ENCODE measurements at regions of chr7 and their contacts with region 1.

Region 1: GRCh38 chr7:123208793-123209192 is 9.0 kb upstream of the SLC13A1 start:
- DNase-seq: peak in 6 of 7 donors; percentile 20 to 58 (median 30)
- H3K4me3 ChIP-seq: no peak overlapping the region
- H3K27ac ChIP-seq: no peak overlapping the region
- H3K4me1 ChIP-seq: peaks cover 12% of the 10 kb centered on the region in 2 donors
- H3K27me3 ChIP-seq: no peaks in the 10 kb centered on the region
- CTCF ChIP-seq: peak; percentile 23 to 72 (median 51)
- POLR2A ChIP-seq: no peak

Region 2: DNA sequence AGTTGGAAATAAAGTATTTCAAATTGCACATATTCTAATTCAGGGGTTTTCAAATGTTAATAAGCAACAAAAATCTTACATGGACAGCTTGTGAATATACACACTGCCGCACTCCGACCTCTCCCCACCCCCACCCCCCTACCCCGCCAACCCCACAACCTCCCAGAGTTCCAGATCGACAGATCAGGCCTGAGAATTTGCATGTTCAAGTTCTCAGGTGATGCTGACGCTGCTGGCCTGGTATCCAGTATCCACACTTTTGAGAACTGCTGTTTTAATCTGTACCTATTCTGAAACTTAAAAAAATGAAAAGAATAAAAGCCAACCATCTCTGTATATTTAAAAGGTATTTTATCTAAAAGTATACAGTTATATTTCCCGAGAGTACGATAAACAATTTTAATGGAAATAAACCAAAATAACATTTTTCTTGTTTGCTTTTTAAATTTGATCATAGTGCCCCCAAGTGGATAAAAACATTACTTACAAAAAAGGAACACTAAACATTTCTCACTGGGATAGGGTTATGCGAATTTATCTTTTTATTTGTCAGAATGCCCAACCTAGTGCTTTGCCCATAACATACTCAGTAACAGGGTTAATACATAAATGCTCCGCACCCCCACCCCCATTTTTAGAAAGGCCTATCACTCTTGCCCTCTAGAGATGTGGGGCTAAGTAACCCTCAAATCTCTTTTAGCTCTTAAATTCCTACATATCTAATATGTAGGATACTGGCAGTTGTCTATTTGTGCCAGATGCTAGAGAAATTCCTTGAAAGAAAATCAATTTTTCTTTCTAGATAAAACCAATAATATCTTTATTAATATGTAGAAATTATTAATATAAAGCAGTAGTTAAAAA is 676.2 kb before region 1 on chr7:
- intact Hi-C with region 1: no loop called
- DNase-seq: no peak
- H3K4me3 ChIP-seq: no peak overlapping the region
- H3K27ac ChIP-seq: no peak overlapping the region
- H3K4me1 ChIP-seq: peaks cover 0 to 5% of the 10 kb centered on the region in 2 donors
- H3K27me3 ChIP-seq: no peaks in the 10 kb centered on the region
- CTCF ChIP-seq: peak; percentile 13 to 51 (median 34)
- POLR2A ChIP-seq: no peak

Region 3: DNA sequence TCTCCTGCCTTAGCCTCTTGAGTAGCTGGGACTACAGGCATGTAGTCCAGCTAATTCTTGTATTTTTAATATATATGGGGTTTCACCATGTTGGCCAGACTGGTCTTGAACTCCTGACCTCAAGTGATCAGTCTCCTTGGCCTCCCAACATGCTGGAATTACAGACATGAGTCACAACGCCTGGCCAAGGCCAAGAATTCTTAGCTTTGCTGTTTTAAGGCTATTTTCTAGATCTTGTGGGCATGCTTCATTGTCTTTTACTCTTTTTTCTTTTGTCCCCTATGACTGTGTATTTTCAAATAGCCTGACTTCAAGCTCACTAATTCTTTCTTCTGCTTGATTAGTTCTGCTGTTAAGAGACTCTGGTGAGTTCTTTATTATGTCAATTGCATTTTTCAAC is 156.9 kb before region 1 on chr7:
- intact Hi-C with region 1: no loop called
- DNase-seq: no peak
- H3K4me3 ChIP-seq: no peak overlapping the region
- H3K27ac ChIP-seq: no peak overlapping the region
- H3K4me1 ChIP-seq: no peaks in the 10 kb centered on the region
- H3K27me3 ChIP-seq: no peaks in the 10 kb centered on the region
- CTCF ChIP-seq: no peak
- POLR2A ChIP-seq: no peak

Region 4: DNA sequence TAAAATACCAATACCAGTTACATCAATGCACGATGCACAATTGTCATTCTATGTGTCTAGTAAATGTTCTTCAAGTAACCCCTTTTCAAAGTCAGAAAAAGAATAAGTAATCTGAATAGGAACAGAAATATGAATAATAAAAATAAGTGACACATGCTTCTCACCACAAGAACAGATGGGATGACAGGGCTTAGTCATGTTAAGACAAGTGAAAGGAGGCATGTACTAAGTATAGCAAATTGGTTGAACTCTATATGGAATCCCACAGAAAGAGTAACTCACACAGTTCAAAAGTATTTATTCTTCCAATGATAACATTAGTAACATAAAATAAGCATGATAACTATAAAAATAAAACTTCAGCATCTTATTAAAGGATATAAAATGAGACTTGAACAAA is 112.4 kb before region 1 on chr7:
- intact Hi-C with region 1: no loop called
- DNase-seq: no peak
- H3K4me3 ChIP-seq: no peak overlapping the region
- H3K27ac ChIP-seq: no peak overlapping the region
- H3K4me1 ChIP-seq: no peaks in the 10 kb centered on the region
- H3K27me3 ChIP-seq: no peaks in the 10 kb centered on the region
- CTCF ChIP-seq: no peak
- POLR2A ChIP-seq: no peak

Region 5: DNA sequence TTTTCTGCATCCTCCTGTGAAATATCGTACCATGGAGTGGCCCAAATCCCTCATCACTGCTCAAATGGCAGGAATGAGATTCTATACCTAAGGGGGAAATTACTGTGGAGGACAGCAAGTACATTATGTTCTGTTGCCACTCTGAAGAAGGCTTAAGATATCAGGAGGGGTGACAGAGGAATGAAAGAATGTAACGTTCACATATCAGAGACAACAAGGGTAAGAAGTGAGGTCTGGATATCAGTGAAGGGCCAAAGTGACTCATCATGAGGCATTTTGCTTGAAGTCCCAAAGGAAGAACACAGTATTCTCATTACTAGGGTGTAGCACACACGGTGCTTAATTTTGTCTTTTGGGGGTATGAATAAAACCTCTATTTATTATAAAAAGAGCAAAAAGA is 62.4 kb after region 1 on chr7:
- intact Hi-C with region 1: no loop called
- DNase-seq: no peak
- H3K4me3 ChIP-seq: no peak overlapping the region
- H3K27ac ChIP-seq: no peak overlapping the region
- H3K4me1 ChIP-seq: no peaks in the 10 kb centered on the region
- H3K27me3 ChIP-seq: no peaks in the 10 kb centered on the region
- CTCF ChIP-seq: no peak
- POLR2A ChIP-seq: no peak

Region 6: DNA sequence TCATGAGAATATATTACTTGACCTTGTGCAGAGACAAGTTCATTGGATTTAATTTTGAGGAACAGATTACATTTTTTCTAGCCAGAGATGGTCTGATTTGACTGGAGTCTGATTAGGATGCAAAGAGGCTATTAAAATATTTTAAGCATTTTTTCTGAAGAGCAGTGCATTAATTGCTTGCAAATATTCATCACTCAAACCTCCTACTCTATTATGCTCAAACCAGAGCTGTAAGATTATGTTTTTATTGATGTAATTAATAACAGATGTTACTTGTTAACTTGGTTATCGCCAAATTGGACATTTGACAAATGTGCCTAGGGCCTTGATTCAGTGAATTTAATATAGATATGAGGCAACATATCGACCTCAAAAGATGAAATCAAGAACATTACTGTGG is 151.8 kb after region 1 on chr7:
- intact Hi-C with region 1: loop called in 1 of 2 experiments (anchors 5 kb)
- DNase-seq: no peak
- H3K4me3 ChIP-seq: no peak overlapping the region
- H3K27ac ChIP-seq: no peak overlapping the region
- H3K4me1 ChIP-seq: no peaks in the 10 kb centered on the region
- H3K27me3 ChIP-seq: no peaks in the 10 kb centered on the region
- CTCF ChIP-seq: no peak
- POLR2A ChIP-seq: no peak

Measured in adrenal gland (tissue), 19 donors.